ENCODE measurements at regions of chr3 and their contacts with region 1.

Region 1: DNA sequence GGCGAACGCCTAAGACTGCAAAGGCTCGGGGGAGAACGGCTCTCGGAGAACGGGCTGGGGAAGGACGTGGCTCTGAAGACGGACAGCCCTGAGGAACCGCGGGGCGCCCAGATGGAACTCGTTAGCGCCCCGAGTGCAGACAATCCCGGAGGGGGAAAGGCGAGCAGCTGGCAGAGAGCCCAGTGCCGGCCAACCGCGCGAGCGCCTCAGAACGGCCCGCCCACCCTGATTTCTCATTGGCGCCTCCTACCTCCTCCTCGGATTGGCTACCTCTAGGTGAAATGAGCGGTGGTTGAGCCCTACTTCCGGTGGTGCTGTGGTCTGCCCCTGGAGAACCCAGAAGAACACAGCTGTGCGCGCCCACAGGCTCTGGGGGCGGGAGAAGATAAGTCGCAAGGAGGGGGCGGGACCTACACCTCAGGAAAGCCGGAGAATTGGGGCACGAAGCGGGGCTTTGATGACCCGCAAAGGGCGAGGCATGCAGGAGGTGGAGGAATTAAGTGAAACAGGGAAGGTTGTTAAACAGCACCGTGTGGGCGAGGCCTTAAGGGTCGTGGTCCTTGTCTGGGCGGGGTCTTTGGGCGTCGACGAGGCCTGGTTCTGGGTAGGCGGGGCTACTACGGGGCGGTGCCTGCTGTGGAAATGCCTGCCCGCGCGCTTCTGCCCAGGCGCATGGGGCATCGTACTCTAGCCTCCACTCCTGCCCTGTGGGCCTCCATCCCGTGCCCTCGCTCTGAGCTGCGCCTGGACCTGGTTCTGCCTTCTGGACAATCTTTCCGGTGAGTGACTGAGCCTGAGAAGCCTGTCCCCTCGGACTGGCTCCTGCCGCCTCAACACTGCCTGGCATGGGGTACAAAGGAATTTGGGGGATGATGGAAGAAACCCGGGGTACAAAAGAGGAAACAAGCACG is at the start of gene OGG1:
- DNase-seq: peak; percentile 97 to 99 (median 99)
- H3K4me3 ChIP-seq: peak within 1 kb of the TSS in 3 of 4 donors; percentile 16 to 54 (median 36)
- H3K27ac ChIP-seq: peak within 1 kb of the TSS; percentile 58 to 91 (median 89)
- H3K4me1 ChIP-seq: peaks cover 21 to 33% of the 10 kb centered on the region in 2 donors
- H3K27me3 ChIP-seq: no peaks in the 10 kb centered on the region
- CTCF ChIP-seq: peak in 1 of 6 experiments; percentile 7
- POLR2A ChIP-seq: peak in 1 of 2 donors; percentile 79
- total RNA-seq, gene OGG1: 13.3 to 34.9 (median 22.3) TPM

Region 2: DNA sequence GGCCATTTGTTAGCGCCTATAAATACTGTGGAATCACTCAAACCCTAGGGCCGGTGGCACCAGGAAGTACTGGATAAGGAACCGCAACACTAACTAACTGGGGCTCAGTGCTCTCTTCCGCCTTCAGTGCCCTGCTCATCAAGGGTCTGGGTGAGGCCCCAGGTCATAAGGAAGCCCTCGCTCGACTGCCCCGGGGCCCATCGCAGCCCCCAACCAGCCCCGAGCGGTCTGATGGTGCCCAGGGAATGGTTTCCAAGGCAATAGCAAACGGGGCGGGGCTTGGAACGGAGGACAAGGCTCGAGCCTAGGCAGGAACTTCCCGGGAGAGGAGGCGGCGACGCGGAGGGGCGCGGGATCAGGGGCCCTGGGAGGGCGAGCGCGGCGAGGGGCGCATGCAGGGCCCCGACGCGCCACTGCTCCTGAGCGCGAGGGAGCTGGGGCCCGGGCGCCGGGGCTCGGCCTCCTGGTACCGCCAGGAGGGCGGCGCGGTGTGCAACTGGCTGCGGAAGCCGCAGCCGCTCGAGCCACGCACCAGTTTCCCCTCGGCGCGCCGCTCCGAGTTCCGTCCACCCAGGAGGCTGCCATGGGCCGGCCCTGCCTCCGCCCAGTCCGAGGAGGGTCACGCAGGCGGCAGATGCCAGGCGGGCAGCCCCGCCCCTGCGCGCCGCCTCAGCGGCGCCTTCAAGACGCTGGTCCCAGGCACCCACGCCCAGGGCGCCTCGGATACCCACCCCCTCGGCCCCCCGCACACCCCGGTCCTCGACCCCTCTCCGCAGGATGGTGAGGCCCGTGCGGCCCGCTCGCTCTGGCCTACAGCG is 59.9 kb after region 1 on chr3 and contains the start of gene TTLL3:
- intact Hi-C with region 1: loop called in 1 of 2 experiments (anchors 10 kb)
- DNase-seq: peak; percentile 68 to 87 (median 78)
- H3K4me3 ChIP-seq: peak within 1 kb of the TSS; percentile 5 to 68 (median 52)
- H3K27ac ChIP-seq: peak within 1 kb of the TSS; percentile 11 to 93 (median 88)
- H3K4me1 ChIP-seq: peaks cover 0 to 15% of the 10 kb centered on the region in 2 donors
- H3K27me3 ChIP-seq: no peaks in the 10 kb centered on the region
- CTCF ChIP-seq: peak in 1 of 6 experiments; percentile 13
- POLR2A ChIP-seq: peak in 1 of 2 donors; percentile 73
- total RNA-seq, gene TTLL3: 13.8 to 68.0 (median 39.5) TPM